ENCODE measurements at regions of chr9 and their contacts with region 1.

Region 1: GRCh38 chr9:6305954-6306563 is 22.1 kb upstream of the TPD52L3 start:
- DNase-seq: peak; percentile 13
- H3K4me3 ChIP-seq: no peak overlapping the region
- H3K27ac ChIP-seq: no peak overlapping the region
- H3K27me3 ChIP-seq: no peaks in the 10 kb centered on the region
- CTCF ChIP-seq: peak; percentile 61

Region 2: DNA sequence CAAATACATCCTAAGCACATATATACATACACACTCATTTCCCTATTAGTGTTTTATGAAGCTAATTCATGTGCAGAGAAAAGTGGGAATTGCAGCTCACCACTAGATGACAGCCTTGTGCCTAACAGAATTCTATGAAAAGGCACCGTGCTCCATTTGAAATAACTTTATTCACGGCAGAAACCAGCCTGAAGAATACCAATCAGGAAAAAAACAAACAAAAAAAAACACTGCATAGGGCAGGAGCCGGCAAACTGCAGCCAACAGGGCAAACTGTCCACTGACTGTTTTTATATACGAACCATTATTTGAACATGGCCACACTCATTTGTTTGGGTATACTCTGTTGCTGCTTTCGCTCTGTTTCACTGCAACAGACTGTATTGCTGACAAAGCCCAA is 506.7 kb before region 1 on chr9:
- CTCF ChIA-PET with region 1: interaction called, 15 read pairs
- POLR2A ChIA-PET with region 1: no interaction called
- DNase-seq: peak; percentile 18
- H3K4me3 ChIP-seq: no peak overlapping the region
- H3K27ac ChIP-seq: no peak overlapping the region
- H3K27me3 ChIP-seq: no peaks in the 10 kb centered on the region
- CTCF ChIP-seq: peak; percentile 89

Region 3: GRCh38 chr9:6197330-6197729 is 108.7 kb before region 1 on chr9:
- CTCF ChIA-PET with region 1: interaction called, 67 read pairs
- POLR2A ChIA-PET with region 1: no interaction called
- DNase-seq: no peak
- H3K4me3 ChIP-seq: no peak overlapping the region
- H3K27ac ChIP-seq: no peak overlapping the region
- H3K27me3 ChIP-seq: peaks cover 2% of the 10 kb centered on the region
- CTCF ChIP-seq: peak; percentile 42

Region 4: DNA sequence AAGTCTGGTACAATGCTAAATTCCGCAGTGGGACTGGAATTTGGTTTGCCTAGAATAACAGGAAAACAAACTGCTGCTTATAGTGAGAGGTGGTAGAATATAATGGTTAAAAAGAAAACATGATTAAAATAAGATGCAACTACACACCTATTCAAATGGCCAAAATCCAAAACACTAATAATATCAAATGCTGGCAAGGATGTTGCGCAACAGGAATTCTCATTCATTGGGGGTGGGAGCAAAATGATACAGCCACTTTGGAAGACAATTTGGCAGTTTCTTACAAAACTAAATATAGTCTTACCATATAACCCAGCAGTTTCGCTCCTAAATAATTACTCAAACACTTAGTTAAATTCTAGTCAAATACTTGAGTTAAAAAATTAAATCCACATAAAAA is 28.6 kb before region 1 on chr9:
- CTCF ChIA-PET with region 1: interaction called, 10 read pairs
- POLR2A ChIA-PET with region 1: no interaction called
- DNase-seq: no peak
- H3K4me3 ChIP-seq: no peak overlapping the region
- H3K27ac ChIP-seq: no peak overlapping the region
- H3K27me3 ChIP-seq: no peaks in the 10 kb centered on the region
- CTCF ChIP-seq: no peak

Measured in AG04450 (cell line).